Tibial artery (tissue), 4 donors: ENCODE measurements at regions of chr6 and their contacts with region 1.

Region 1: DNA sequence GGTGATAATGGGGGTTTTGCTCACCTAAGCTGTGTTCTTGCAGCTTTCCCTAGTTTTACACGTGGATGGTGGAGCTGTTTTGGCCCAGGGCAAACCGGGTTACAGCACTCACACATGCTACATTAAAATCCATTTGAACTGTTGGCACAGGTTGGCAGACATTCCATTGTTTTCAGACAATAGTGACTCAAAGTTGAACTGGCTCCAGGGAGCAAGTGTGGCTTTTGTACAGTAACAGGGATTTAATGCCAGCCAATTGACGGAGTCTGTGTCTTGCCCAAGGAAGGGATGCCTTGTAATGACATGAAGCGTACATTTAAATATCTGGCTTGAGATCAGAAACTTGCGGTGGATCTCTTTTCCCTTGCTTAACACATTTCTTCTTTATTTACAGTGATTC is 183.1 kb downstream of the DTNBP1 start:
- DNase-seq: no peak
- H3K4me3 ChIP-seq: no peak overlapping the region
- H3K27ac ChIP-seq: no peak overlapping the region
- H3K4me1 ChIP-seq: peaks cover 0 to 28% (median 14%) of the 10 kb centered on the region in 4 donors
- H3K27me3 ChIP-seq: no peaks in the 10 kb centered on the region
- CTCF ChIP-seq: no peak

Region 2: GRCh38 chr6:14210663-14211561 is 1268.8 kb before region 1 on chr6:
- intact Hi-C with region 1: loop called (anchors 10 kb)
- DNase-seq: peak; percentile 81 to 94
- H3K4me3 ChIP-seq: peak overlapping the region; percentile 50 to 55
- H3K27ac ChIP-seq: peak overlapping the region in 1 of 2 donors; percentile 47
- H3K4me1 ChIP-seq: peaks cover 0 to 19% (median 13%) of the 10 kb centered on the region in 4 donors
- H3K27me3 ChIP-seq: no peaks in the 10 kb centered on the region
- CTCF ChIP-seq: peak; percentile 62 to 98